ENCODE measurements at regions of chr10 and their contacts with region 1.

Region 1: GRCh38 chr10:69408318-69409175 is 8.2 kb downstream of the TACR2 start:
- DNase-seq: peak; percentile 99
- ATAC-seq: peak; percentile 82
- H3K4me3 ChIP-seq: peak overlapping the region; percentile 42; the same call in 1 of the 2 replicates
- H3K27ac ChIP-seq: peak overlapping the region; percentile 28
- H3K4me1 ChIP-seq: peaks cover 30% of the 10 kb centered on the region
- H3K27me3 ChIP-seq: no peaks in the 10 kb centered on the region
- CTCF ChIP-seq: peak; percentile 61

Region 2: GRCh38 chr10:69237528-69238159 is 170.9 kb before region 1 on chr10:
- CTCF ChIA-PET with region 1: interaction called, 3 read pairs
- POLR2A ChIA-PET with region 1: no interaction called
- intact Hi-C with region 1: loop called (anchors 5 kb)
- DNase-seq: peak; percentile 98
- ATAC-seq: peak; percentile 94
- H3K4me3 ChIP-seq: no peak overlapping the region
- H3K27ac ChIP-seq: no peak overlapping the region
- H3K4me1 ChIP-seq: peaks cover 31% of the 10 kb centered on the region
- H3K27me3 ChIP-seq: no peaks in the 10 kb centered on the region
- CTCF ChIP-seq: peak; percentile 99

Region 3: GRCh38 chr10:69439813-69440506 is 31.4 kb after region 1 on chr10:
- CTCF ChIA-PET with region 1: interaction called, 11 read pairs
- POLR2A ChIA-PET with region 1: no interaction called
- intact Hi-C with region 1: no loop called
- DNase-seq: peak; percentile 96
- ATAC-seq: peak; percentile 45
- H3K4me3 ChIP-seq: peak overlapping the region; percentile 31; the same call in 1 of the 2 replicates
- H3K27ac ChIP-seq: peak overlapping the region; percentile 91
- H3K4me1 ChIP-seq: peaks cover 53% of the 10 kb centered on the region
- H3K27me3 ChIP-seq: no peaks in the 10 kb centered on the region
- CTCF ChIP-seq: no peak

Region 4: DNA sequence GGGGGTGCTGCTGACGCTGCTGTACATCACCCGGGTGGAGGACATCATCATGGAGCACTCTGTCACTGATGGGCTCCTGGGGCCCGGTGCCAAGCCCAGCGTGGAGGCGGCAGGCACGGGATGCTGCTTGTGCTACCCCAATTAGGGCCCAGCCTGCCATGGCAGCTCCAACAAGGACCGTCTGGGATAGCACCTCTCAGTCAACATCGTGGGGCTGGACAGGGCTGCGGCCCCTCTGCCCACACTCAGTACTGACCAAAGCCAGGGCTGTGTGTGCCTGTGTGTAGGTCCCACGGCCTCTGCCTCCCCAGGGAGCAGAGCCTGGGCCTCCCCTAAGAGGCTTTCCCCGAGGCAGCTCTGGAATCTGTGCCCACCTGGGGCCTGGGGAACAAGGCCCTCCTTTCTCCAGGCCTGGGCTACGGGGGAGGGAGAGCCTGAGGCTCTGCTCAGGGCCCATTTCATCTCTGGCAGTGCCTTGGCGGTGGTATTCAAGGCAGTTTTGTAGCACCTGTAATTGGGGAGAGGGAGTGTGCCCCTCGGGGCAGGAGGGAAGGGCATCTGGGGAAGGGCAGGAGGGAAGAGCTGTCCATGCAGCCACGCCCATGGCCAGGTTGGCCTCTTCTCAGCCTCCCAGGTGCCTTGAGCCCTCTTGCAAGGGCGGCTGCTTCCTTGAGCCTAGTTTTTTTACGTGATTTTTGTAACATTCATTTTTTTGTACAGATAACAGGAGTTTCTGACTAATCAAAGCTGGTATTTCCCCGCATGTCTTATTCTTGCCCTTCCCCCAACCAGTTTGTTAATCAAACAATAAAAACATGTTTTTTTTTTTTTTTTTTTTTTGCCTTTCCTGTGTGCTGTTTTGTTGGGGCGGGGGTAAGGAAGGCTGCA is 98.5 kb after region 1 on chr10:
- CTCF ChIA-PET with region 1: interaction called, 16 read pairs
- POLR2A ChIA-PET with region 1: interaction called, 3 read pairs
- intact Hi-C with region 1: loop called (anchors 1 kb)
- DNase-seq: peak; percentile 85
- ATAC-seq: peak; percentile 42
- H3K4me3 ChIP-seq: peak overlapping the region; percentile 43; the same call in 1 of the 2 replicates
- H3K27ac ChIP-seq: peak overlapping the region; percentile 78
- H3K4me1 ChIP-seq: peaks cover 19% of the 10 kb centered on the region
- H3K27me3 ChIP-seq: no peaks in the 10 kb centered on the region
- CTCF ChIP-seq: no peak

Region 5: GRCh38 chr10:69588386-69588785 is 179.8 kb after region 1 on chr10:
- CTCF ChIA-PET with region 1: interaction called, 13 read pairs
- POLR2A ChIA-PET with region 1: no interaction called
- intact Hi-C with region 1: no loop called
- DNase-seq: no peak
- ATAC-seq: peak; percentile 43
- H3K4me3 ChIP-seq: no peak overlapping the region
- H3K27ac ChIP-seq: no peak overlapping the region
- H3K4me1 ChIP-seq: no peaks in the 10 kb centered on the region
- H3K27me3 ChIP-seq: peaks cover 54% of the 10 kb centered on the region
- CTCF ChIP-seq: no peak

Measured in PC-3 (cell line).